ENCODE measurements at regions of chr19 and their contacts with region 1.

Region 1: GRCh38 chr19:16324384-16325160 is at the start of gene KLF2:
- DNase-seq: peak; percentile 91
- ATAC-seq: peak; percentile 70
- H3K4me3 Mint-ChIP-seq: peak within 1 kb of the TSS; percentile 68
- H3K27ac Mint-ChIP-seq: peak within 1 kb of the TSS; percentile 48
- H3K4me1 Mint-ChIP-seq: peaks cover 34% of the 10 kb centered on the region
- H3K27me3 Mint-ChIP-seq: peaks cover 48% of the 10 kb centered on the region
- total RNA-seq, gene KLF2: 172 to 193 TPM

Region 2: DNA sequence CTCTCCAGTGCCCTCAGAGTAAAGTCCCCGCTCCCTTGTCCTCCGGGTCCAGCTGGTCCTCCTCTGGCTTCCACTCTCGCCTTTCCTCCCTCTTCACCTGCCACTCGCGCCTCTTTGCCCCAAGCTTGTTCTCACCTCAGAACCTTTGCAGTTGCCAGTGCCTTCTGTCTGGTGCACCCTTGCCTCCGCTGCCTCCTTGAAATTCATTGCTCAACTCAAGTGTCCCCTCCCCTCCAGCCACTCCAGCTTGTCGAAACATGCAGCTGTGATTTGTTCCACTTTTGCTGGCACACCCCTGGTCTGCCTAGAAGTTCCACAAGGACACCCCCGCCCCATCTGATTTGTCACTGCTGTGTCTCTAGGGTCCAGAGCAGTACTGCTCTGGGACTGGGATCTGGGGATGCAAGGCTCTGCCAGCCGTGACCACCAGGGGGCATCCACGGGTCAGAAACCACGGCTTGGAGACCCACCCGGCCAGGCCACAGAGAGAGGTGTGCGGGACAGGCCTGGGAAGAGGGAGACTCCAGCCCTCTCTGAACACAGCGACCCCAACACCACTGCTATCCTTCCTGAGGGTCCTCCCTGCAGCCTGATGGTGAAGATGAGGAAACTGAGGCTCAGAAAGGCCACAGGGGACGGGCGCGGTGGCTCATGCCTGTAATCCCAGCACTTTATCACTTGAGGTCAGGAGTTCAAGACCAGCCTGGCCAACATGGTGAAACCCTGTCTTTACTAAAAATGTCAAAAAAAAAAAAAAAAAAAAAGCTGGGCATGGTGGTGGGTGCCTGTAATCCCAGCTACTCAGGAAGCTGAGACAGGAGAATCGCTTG is 77.0 kb before region 1 on chr19:
- POLR2A ChIA-PET with region 1: interaction called, 21 read pairs
- DNase-seq: peak; percentile 91
- ATAC-seq: peak; percentile 85
- H3K4me3 Mint-ChIP-seq: no peak overlapping the region
- H3K27ac Mint-ChIP-seq: peak overlapping the region; percentile 34
- H3K4me1 Mint-ChIP-seq: peaks cover 15% of the 10 kb centered on the region
- H3K27me3 Mint-ChIP-seq: peaks cover 7% of the 10 kb centered on the region

Region 3: DNA sequence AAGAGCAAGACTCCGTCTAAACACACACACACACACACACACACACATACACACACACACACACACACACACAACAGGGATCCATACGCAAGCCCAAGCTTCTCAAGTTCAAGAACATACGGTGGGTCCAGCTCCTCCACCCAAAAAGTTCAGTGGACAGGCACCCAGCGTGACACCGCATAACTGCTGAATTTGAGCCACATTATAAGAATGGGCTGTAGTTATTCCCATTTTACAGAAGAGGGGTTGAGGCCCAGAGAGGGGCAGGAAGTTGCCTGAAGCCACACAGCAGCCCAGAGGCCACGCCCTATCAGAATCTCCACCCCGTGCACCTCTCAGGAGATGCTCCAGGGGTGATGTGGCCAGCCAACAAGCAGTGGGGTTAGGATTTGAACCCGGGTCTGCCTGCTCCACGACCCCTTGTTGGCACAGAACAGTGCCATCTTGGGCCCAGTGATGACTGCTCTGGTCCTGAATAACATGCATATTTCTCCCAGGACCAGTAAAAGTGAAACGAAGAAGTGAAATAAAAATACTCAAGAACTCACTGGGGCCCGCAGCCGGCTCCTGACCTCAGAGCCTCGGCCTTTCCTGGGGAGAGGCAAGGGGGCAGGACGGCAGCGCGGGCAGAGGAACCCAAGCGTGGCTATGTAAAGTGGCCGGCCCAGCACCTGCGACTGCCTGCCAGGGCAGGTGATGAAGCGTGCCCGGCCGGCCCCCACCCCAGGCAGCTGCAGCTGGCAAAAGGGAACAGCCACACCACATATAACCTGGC is 65.0 kb before region 1 on chr19:
- POLR2A ChIA-PET with region 1: interaction called, 29 read pairs
- DNase-seq: no peak
- ATAC-seq: peak; percentile 23
- H3K4me3 Mint-ChIP-seq: no peak overlapping the region
- H3K27ac Mint-ChIP-seq: peak overlapping the region; percentile 38
- H3K4me1 Mint-ChIP-seq: peaks cover 42% of the 10 kb centered on the region
- H3K27me3 Mint-ChIP-seq: peaks cover 16% of the 10 kb centered on the region

Region 4: GRCh38 chr19:16266586-16266942 is 58.0 kb before region 1 on chr19:
- POLR2A ChIA-PET with region 1: interaction called, 29 read pairs
- DNase-seq: peak; percentile 68
- ATAC-seq: peak; percentile 76
- H3K4me3 Mint-ChIP-seq: peak overlapping the region; percentile 69
- H3K27ac Mint-ChIP-seq: peak overlapping the region; percentile 76
- H3K4me1 Mint-ChIP-seq: peaks cover 50% of the 10 kb centered on the region
- H3K27me3 Mint-ChIP-seq: peaks cover 44% of the 10 kb centered on the region

Region 5: GRCh38 chr19:16293118-16294091 is 31.2 kb before region 1 on chr19:
- POLR2A ChIA-PET with region 1: no interaction called
- DNase-seq: no peak
- ATAC-seq: no peak
- H3K4me3 Mint-ChIP-seq: no peak overlapping the region
- H3K27ac Mint-ChIP-seq: no peak overlapping the region
- H3K4me1 Mint-ChIP-seq: peaks cover 8% of the 10 kb centered on the region
- H3K27me3 Mint-ChIP-seq: peaks cover 21% of the 10 kb centered on the region

Region 6: DNA sequence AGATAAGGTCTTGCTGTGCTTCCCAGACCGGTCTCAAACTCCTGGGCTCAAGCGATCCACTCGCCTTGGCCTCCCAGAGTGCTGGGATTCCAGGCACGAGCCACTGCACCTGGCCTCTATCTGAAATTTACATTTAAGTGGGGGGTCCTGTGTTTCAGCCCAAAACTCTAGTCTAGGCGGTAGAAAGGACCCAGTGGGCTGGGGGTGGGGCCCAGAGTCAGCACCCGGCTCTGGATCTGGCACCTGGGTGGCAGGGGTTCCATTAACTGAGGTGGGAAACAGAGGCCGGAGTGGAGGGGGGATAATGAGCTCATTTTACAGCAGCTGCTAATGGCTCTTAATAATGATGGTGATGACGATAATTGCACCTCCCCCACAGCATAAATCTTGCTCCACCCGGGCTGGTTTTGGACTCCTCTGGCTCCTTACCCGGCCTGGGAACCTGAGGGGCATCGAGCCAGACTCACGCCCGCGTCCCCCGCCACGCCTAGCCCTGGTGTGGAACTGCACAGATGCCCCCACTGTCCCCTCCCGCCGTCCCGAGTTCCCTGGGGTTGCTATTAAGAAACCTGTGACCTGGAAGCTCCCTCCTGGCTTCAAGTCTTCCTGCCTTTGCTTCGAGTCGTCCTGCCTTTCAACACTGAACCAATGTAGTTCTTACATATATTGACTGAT is 17.7 kb before region 1 on chr19:
- POLR2A ChIA-PET with region 1: no interaction called
- DNase-seq: no peak
- ATAC-seq: no peak
- H3K4me3 Mint-ChIP-seq: no peak overlapping the region
- H3K27ac Mint-ChIP-seq: no peak overlapping the region
- H3K4me1 Mint-ChIP-seq: peaks cover 3% of the 10 kb centered on the region
- H3K27me3 Mint-ChIP-seq: peaks cover 6% of the 10 kb centered on the region

Region 7: DNA sequence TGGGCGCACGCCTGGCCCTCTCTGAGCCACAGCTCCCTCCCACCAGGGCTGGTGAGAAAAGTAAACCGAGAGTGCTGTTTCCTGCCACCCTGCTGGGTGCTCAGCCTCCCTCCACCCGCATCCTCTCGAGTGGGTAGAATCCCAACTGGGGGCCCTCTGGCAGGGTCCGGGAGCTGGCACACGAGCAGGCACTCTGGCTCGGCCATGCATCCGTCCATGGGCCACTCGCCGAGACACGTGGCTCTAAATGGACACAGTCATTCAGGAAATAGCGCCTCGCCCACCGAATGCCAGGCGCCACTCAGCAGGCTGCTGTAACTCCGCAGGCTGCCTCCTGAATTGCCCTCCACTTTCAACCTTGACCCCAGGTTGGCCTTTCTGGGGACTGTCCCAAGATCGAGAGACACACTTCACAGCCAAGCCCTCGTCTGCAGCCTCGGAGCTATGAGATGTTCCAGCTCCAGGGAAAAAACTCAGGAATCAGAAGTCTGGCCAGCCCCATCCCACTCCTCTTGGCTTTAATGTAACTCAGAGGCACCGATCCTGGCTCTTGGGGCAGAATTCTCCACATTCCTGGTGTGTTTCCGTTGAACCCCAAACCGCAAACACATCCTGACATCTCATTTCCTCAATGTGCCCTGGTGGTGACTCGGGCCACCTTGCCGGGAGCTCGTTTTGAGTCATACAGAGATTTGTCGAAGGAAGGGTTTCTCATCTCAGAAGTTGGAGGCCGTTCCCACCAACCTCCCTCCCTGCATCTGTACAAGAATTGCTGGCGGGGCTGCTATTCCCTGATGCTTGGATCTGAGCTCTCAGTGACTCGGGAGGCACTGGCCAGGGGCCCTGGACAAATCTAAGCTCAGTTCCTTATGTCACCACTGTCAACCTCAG is 14.1 kb after region 1 on chr19:
- POLR2A ChIA-PET with region 1: interaction called, 68 read pairs
- DNase-seq: peak; percentile 61
- ATAC-seq: peak; percentile 51
- H3K4me3 Mint-ChIP-seq: peak overlapping the region; percentile 81
- H3K27ac Mint-ChIP-seq: peak overlapping the region; percentile 84
- H3K4me1 Mint-ChIP-seq: peaks cover 46% of the 10 kb centered on the region
- H3K27me3 Mint-ChIP-seq: peaks cover 2% of the 10 kb centered on the region

Region 8: GRCh38 chr19:16371540-16371986 is 47.0 kb after region 1 on chr19:
- POLR2A ChIA-PET with region 1: interaction called, 532 read pairs
- DNase-seq: peak; percentile 93
- ATAC-seq: peak; percentile 56
- H3K4me3 Mint-ChIP-seq: no peak overlapping the region
- H3K27ac Mint-ChIP-seq: no peak overlapping the region
- H3K4me1 Mint-ChIP-seq: peaks cover 64% of the 10 kb centered on the region
- H3K27me3 Mint-ChIP-seq: peaks cover 4% of the 10 kb centered on the region

Region 9: GRCh38 chr19:16382775-16383543 is 58.4 kb after region 1 on chr19:
- POLR2A ChIA-PET with region 1: interaction called, 532 read pairs
- DNase-seq: peak; percentile 82
- ATAC-seq: peak; percentile 53
- H3K4me3 Mint-ChIP-seq: peak overlapping the region; percentile 11
- H3K27ac Mint-ChIP-seq: peak overlapping the region; percentile 43
- H3K4me1 Mint-ChIP-seq: peaks cover 24% of the 10 kb centered on the region
- H3K27me3 Mint-ChIP-seq: no peaks in the 10 kb centered on the region